GM12878 (cell line): ENCODE measurements at regions of chr14 and their contacts with region 1.

Region 1: DNA sequence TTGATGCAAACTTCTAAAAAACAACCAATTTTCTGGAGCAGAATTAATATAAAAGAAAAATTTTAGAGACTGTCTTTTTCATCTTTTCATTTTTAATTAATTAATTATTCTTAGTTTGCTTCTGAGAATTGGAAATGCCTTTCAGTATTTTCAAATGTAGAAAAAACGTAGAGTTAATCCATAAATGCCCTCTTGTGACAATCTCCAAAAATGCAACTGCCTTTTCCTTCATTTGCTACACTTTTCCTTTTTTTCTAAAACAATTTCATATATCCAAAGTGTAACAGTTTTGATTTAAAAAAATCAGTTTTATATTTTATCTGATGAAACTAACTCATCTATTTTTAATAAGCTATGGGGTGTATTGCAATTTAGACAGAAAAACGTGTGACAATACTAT is 409.3 kb downstream of the PRKD1 start:
- DNase-seq: no peak
- ATAC-seq: no peak
- H3K4me3 ChIP-seq: no peak overlapping the region
- H3K27ac ChIP-seq: no peak overlapping the region
- H3K4me1 ChIP-seq: no peaks in the 10 kb centered on the region
- H3K27me3 ChIP-seq: no peaks in the 10 kb centered on the region
- CTCF ChIP-seq: no peak
- EP300 ChIP-seq: no peak
- POLR2A ChIP-seq: no peak
- RAD21 ChIP-seq: no peak

Region 2: DNA sequence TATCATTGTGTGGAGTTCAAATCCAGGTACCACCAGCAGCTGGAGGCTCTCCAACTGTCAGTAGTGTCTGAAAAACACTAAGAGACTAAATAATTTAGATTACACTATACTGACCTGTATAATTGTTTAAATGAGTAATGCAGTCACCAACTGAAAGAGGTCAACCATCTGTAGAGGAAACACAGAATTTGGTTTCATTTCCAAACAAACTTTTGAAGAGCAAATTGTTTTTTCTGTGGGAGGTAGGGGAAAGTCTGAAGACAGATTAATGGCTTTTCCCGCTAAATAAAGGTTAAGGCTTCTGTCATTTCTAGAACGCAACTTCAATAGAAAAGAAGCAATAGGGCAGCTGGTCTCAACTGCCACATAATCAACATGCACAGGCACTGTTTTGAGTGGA is 53.2 kb before region 1 on chr14:
- CTCF ChIA-PET with region 1: no interaction called
- POLR2A ChIA-PET with region 1: no interaction called
- RAD21 ChIA-PET with region 1: no interaction called
- SMC1A ChIA-PET with region 1: no interaction called
- in situ Hi-C with region 1: no loop called
- intact Hi-C with region 1: loop called (anchors 5 kb)
- DNase-seq: no peak
- ATAC-seq: no peak
- H3K4me3 ChIP-seq: no peak overlapping the region
- H3K27ac ChIP-seq: no peak overlapping the region
- H3K4me1 ChIP-seq: no peaks in the 10 kb centered on the region
- H3K27me3 ChIP-seq: no peaks in the 10 kb centered on the region
- CTCF ChIP-seq: no peak
- EP300 ChIP-seq: no peak
- POLR2A ChIP-seq: no peak
- RAD21 ChIP-seq: no peak

Region 3: DNA sequence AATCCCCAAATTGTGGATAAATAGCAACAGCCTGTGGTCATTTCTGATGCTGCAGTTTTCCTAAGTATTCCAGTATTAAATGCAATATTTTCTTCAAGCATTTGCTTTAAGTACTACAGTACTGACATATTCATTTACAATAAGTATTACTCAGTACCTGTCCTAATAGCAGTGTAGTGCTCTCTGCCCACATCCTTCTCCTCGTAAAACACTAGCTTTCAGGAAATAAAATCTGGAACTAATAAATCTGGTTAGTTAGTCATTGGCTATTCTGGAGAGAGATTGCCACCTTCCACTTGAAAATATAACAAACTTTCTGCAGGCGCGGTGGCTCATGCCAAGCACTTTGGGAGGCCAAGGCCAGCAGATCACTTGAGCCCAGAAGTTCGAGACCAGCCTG is 32.2 kb before region 1 on chr14:
- CTCF ChIA-PET with region 1: no interaction called
- POLR2A ChIA-PET with region 1: no interaction called
- RAD21 ChIA-PET with region 1: no interaction called
- SMC1A ChIA-PET with region 1: no interaction called
- in situ Hi-C with region 1: no loop called
- intact Hi-C with region 1: no loop called
- DNase-seq: no peak
- ATAC-seq: no peak
- H3K4me3 ChIP-seq: no peak overlapping the region
- H3K27ac ChIP-seq: no peak overlapping the region
- H3K4me1 ChIP-seq: no peaks in the 10 kb centered on the region
- H3K27me3 ChIP-seq: no peaks in the 10 kb centered on the region
- CTCF ChIP-seq: no peak
- EP300 ChIP-seq: no peak
- POLR2A ChIP-seq: no peak
- RAD21 ChIP-seq: no peak